ENCODE measurements at regions of chr11 and their contacts with region 1.

Region 1: GRCh38 chr11:75520688-75521087 is 5.1 kb downstream of the GDPD5 start:
- DNase-seq: no peak
- H3K4me3 ChIP-seq: no peak overlapping the region
- H3K27ac ChIP-seq: no peak overlapping the region
- H3K4me1 ChIP-seq: peaks cover 0 to 31% of the 10 kb centered on the region in 2 experiments; a peak in 1 of 4 replicates
- H3K27me3 ChIP-seq: no peaks in the 10 kb centered on the region
- CTCF ChIP-seq: no peak
- EP300 ChIP-seq: no peak
- RAD21 ChIP-seq: no peak

Region 2: DNA sequence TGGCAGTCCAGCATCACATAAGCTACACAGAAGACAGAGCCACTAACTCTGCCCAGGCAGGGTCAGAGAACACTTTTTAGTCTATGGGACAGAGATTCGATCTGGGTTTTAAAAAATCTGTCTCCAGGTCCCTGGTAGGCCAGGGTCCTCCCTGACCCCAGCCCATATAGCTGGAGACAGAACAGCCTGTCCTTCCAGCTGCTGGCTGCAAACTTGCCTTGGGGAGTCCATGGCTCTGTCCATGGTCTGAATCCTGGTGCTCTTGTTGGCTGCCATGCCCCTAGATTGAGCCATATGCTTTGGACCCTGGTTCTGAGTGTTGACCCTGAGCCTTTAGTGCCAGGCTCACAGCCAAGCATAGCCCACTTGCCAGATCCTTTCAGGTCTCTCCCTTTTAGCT is 1013.9 kb before region 1 on chr11:
- CTCF ChIA-PET with region 1: no interaction called
- POLR2A ChIA-PET with region 1: no interaction called
- DNase-seq: no peak
- H3K4me3 ChIP-seq: no peak overlapping the region
- H3K27ac ChIP-seq: no peak overlapping the region
- H3K4me1 ChIP-seq: peaks cover 0 to 6% of the 10 kb centered on the region in 2 experiments; a peak in 1 of 4 replicates
- H3K27me3 ChIP-seq: no peaks in the 10 kb centered on the region
- CTCF ChIP-seq: no peak
- EP300 ChIP-seq: no peak
- RAD21 ChIP-seq: no peak

Region 3: GRCh38 chr11:75301601-75302345 is 218.9 kb before region 1 on chr11:
- CTCF ChIA-PET with region 1: no interaction called
- POLR2A ChIA-PET with region 1: no interaction called
- DNase-seq: no peak
- H3K4me3 ChIP-seq: no peak overlapping the region
- H3K27ac ChIP-seq: peak overlapping the region in 1 of 2 experiments; percentile 75; a peak in 2 of 4 replicates
- H3K4me1 ChIP-seq: peaks cover 0 to 31% of the 10 kb centered on the region in 2 experiments; a peak in 2 of 4 replicates
- H3K27me3 ChIP-seq: no peaks in the 10 kb centered on the region
- CTCF ChIP-seq: no peak
- EP300 ChIP-seq: no peak
- RAD21 ChIP-seq: no peak

Region 4: GRCh38 chr11:75508044-75508561 is 12.6 kb before region 1 on chr11:
- CTCF ChIA-PET with region 1: interaction called, 12 read pairs
- POLR2A ChIA-PET with region 1: interaction called, 6 read pairs
- DNase-seq: peak; percentile 52
- H3K4me3 ChIP-seq: no peak overlapping the region
- H3K27ac ChIP-seq: peak overlapping the region in 1 of 2 experiments; percentile 41; a peak in 1 of 4 replicates
- H3K4me1 ChIP-seq: peaks cover 0 to 35% of the 10 kb centered on the region in 2 experiments; a peak in 1 of 4 replicates
- H3K27me3 ChIP-seq: no peaks in the 10 kb centered on the region
- CTCF ChIP-seq: no peak
- EP300 ChIP-seq: no peak
- RAD21 ChIP-seq: no peak